MCF 10A (cell line): ENCODE measurements at regions of chr1 and their contacts with region 1.

Region 1: DNA sequence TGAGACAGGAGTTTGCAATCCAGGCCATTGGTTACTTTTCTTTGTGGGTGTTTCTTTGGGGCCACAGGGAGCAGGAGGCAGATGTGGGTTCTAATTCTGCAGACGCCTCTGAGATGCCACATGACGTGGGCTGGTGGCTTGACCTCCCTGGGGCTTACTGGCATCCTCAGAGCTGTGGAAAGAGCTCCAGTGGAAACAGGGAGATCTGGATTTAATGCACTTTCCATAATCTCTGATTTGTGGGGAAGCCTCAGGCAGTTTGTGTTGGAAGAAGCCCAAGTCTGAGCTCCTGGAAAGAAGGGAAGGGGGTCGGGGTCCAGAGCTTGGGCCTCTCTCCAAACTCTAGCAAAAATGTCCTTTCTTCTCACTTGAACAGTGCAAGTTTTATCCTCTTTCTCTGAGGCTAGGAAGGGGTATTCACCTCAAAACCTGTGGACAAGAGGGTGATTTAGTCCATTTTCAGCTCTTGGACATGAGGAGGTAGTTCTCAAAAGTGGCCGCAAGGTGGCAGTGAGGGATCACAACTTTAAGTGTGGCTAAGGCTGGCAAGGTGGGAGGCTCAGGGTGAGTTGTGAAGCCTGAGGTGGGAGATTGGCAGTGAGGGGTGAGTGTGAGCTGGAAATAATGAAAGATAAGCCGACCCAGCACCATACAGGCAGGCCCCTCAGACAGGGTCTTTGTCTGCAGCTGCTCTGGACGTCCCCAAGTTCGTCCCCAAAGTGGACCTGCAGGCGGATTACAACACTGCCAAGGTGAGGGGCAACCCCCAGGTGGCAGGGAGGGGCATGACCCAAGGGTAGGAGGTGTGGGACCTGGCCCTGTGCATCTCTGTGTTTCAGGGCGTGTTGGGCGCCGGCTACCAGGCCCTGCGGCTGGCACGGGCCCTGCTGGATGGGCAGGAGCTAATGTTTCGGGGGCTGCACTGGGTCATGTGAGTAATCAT is 9.2 kb downstream of the IKBKE start:
- DNase-seq: peak; percentile 93
- H3K4me3 Mint-ChIP-seq: no peak overlapping the region
- H3K27ac Mint-ChIP-seq: no peak overlapping the region
- H3K4me1 Mint-ChIP-seq: peaks cover 29% of the 10 kb centered on the region
- H3K27me3 Mint-ChIP-seq: no peaks in the 10 kb centered on the region
- CTCF ChIP-seq: peak; percentile 97

Region 2: GRCh38 chr1:205668951-205669340 is 810.5 kb before region 1 on chr1:
- CTCF ChIA-PET with region 1: no interaction called
- POLR2A ChIA-PET with region 1: no interaction called
- intact Hi-C with region 1: no loop called
- DNase-seq: no peak
- H3K4me3 Mint-ChIP-seq: no peak overlapping the region
- H3K27ac Mint-ChIP-seq: no peak overlapping the region
- H3K4me1 Mint-ChIP-seq: peaks cover 28% of the 10 kb centered on the region
- H3K27me3 Mint-ChIP-seq: no peaks in the 10 kb centered on the region
- CTCF ChIP-seq: no peak

Region 3: DNA sequence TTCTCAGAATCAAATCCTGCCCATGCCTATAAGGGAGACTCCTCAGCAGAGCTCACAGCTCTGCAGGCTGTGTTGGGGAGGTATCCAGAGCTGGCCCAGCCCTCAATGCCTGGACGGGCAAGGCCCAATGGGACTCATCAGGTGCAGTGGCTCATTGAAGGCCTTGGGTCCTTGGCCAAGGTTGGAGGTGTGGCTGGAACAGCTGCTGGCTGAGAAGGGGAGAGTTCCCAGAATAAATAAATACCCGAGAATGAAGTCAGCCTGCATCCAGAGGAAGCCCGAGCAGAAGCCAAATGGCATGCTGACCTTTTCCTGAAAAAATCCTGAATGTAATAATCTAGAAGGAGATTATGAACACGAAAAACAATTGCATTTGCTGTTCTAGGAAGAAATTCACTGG is 34.3 kb before region 1 on chr1:
- CTCF ChIA-PET with region 1: interaction called, 14 read pairs
- POLR2A ChIA-PET with region 1: interaction called, 5 read pairs
- intact Hi-C with region 1: no loop called
- DNase-seq: no peak
- H3K4me3 Mint-ChIP-seq: no peak overlapping the region
- H3K27ac Mint-ChIP-seq: peak overlapping the region; percentile 43
- H3K4me1 Mint-ChIP-seq: peaks cover 14% of the 10 kb centered on the region
- H3K27me3 Mint-ChIP-seq: no peaks in the 10 kb centered on the region
- CTCF ChIP-seq: no peak

Region 4: DNA sequence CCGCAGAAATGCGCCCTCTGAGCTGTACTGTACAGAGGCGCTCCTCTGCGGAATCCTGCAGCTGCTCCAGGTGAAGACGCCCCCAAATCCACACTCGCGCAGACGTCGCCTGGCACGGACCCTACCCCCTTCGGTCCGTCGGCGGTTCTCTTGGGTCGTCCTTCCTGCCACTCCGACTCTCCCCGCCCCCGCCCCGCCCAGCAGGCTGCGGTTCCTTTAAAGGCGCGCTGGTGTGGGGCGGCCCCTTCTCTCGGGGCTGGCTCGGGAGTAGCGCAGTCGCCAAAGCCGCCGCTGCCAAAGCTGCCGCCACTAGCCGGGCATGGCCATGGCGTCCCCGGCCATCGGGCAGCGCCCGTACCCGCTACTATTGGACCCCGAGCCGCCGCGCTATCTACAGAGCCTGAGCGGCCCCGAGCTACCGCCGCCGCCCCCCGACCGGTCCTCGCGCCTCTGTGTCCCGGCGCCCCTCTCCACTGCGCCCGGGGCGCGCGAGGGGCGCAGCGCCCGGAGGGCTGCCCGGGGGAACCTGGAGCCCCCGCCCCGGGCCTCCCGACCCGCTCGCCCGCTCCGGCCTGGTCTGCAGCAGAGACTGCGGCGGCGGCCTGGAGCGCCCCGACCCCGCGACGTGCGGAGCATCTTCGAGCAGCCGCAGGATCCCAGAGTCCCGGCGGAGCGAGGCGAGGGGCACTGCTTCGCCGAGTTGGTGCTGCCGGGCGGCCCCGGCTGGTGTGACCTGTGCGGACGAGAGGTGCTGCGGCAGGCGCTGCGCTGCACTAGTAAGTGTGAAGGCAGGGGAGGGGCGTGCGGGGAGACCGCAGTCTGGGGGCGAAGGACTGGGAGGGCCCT is 28.1 kb after region 1 on chr1 and contains the start of gene RASSF5:
- CTCF ChIA-PET with region 1: interaction called, 115 read pairs
- POLR2A ChIA-PET with region 1: interaction called, 7 read pairs
- intact Hi-C with region 1: no loop called
- DNase-seq: peak; percentile 87
- H3K4me3 Mint-ChIP-seq: peak within 1 kb of the TSS; percentile 72
- H3K27ac Mint-ChIP-seq: peak within 1 kb of the TSS; percentile 72
- H3K4me1 Mint-ChIP-seq: peaks cover 74% of the 10 kb centered on the region
- H3K27me3 Mint-ChIP-seq: no peaks in the 10 kb centered on the region
- CTCF ChIP-seq: no peak
- total RNA-seq, gene RASSF5: 8.3 and 9.6 TPM in 2 replicates

Region 5: DNA sequence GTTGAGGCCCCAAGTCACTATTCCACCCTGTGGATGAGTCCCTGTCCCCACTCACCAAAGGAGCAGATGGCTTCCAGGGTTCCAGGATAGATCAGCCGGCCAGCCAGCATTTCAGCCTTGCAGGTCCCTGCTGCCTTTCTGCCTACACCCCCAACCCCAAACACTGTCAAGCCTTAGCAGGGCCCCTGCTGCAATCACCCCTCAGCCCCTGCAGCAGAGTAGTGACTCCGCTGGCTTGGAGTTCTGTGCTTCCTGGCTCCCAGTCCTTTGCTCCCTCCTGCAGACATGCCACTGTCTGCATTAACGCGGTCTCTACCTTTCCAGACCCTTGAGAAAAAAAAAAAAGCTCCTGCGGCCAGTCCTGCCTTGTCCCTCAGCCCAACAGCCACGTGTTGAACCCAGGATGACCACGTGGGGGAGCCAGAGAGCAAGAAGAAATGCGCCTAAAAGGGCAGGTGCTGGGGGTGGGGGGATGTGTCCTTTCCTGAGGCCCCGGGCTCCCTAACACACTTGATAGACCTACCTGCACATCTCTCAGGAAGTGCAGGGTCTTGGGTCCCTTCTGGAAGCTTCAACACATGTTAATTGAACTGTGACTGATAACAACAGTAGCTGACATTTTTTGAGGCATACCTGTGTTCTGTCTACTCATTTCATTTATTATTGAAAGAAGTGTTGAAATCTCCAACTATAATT is 65.3 kb after region 1 on chr1:
- CTCF ChIA-PET with region 1: interaction called, 17 read pairs
- POLR2A ChIA-PET with region 1: no interaction called
- intact Hi-C with region 1: no loop called
- DNase-seq: peak; percentile 89
- H3K4me3 Mint-ChIP-seq: no peak overlapping the region
- H3K27ac Mint-ChIP-seq: no peak overlapping the region
- H3K4me1 Mint-ChIP-seq: no peaks in the 10 kb centered on the region
- H3K27me3 Mint-ChIP-seq: no peaks in the 10 kb centered on the region
- CTCF ChIP-seq: peak; percentile 98

Region 6: GRCh38 chr1:206590025-206590758 is 110.7 kb after region 1 on chr1:
- CTCF ChIA-PET with region 1: interaction called, 268 read pairs
- POLR2A ChIA-PET with region 1: interaction called, 5 read pairs
- intact Hi-C with region 1: no loop called
- DNase-seq: peak; percentile 95
- H3K4me3 Mint-ChIP-seq: no peak overlapping the region
- H3K27ac Mint-ChIP-seq: peak overlapping the region; percentile 66
- H3K4me1 Mint-ChIP-seq: peaks cover 28% of the 10 kb centered on the region
- H3K27me3 Mint-ChIP-seq: no peaks in the 10 kb centered on the region
- CTCF ChIP-seq: peak; percentile 41

Region 7: GRCh38 chr1:206612129-206612876 is 132.8 kb after region 1 on chr1 and contains the start of gene EIF2D:
- CTCF ChIA-PET with region 1: interaction called, 10 read pairs
- POLR2A ChIA-PET with region 1: no interaction called
- intact Hi-C with region 1: no loop called
- DNase-seq: peak; percentile 99
- H3K4me3 Mint-ChIP-seq: peak within 1 kb of the TSS; percentile 88
- H3K27ac Mint-ChIP-seq: peak within 1 kb of the TSS; percentile 97
- H3K4me1 Mint-ChIP-seq: peaks cover 21% of the 10 kb centered on the region
- H3K27me3 Mint-ChIP-seq: no peaks in the 10 kb centered on the region
- CTCF ChIP-seq: peak; percentile 100
- total RNA-seq, gene EIF2D: 110 and 116 TPM in 2 replicates

Region 8: DNA sequence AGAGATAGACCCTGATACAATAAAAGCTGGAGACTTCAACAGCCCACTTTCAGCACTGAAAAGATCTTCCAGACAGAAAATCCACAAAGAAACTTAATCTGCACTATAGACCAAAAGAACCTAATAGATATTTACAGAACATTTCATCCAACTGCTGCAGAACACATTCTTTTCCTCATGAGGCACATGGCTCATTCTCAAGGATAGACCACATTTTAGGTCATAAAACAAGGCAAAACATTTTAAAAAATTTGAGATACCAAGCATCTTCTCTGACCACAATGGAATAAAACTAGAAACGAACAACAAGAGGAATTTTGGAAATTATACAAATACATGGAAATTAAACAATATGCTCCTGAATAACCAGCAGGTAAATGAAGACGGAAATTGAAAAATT is 370.9 kb after region 1 on chr1:
- CTCF ChIA-PET with region 1: no interaction called
- POLR2A ChIA-PET with region 1: no interaction called
- intact Hi-C with region 1: no loop called
- DNase-seq: no peak
- H3K4me3 Mint-ChIP-seq: no peak overlapping the region
- H3K27ac Mint-ChIP-seq: no peak overlapping the region
- H3K4me1 Mint-ChIP-seq: peaks cover 15% of the 10 kb centered on the region
- H3K27me3 Mint-ChIP-seq: peaks cover 23% of the 10 kb centered on the region
- CTCF ChIP-seq: no peak